ENCODE measurements at regions of chr6 and their contacts with region 1.

Region 1: DNA sequence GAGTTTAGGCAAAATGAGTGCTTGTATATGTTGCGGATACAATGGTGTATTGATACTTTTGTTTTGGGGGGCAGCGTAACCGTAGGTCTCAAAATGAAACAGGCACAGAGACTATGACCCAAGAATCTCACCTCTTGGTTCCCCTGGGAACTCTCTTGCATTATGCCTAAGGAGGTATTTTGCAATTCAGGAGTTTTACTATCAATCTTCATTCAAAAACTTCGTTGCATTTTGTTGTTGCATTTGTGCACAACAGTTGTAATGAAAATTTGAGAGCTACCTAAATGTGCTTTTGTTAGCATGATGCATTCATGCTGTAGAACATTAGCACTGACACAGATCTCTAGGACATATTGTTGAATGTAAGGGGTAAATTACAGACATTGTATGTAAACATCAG is 18.2 kb downstream of the VTA1 start:
- DNase-seq: no peak
- ATAC-seq: no peak
- H3K4me3 ChIP-seq: no peak overlapping the region
- H3K4me3 Mint-ChIP-seq: no peak overlapping the region
- H3K27ac ChIP-seq: no peak overlapping the region
- H3K27ac Mint-ChIP-seq: peak overlapping the region in 1 of 9 donors; percentile 47
- H3K4me1 ChIP-seq: no peaks in the 10 kb centered on the region
- H3K4me1 Mint-ChIP-seq: peaks cover 12 to 53% (median 34%) of the 10 kb centered on the region in 7 donors
- H3K27me3 ChIP-seq: no peaks in the 10 kb centered on the region
- H3K27me3 Mint-ChIP-seq: no peaks in the 10 kb centered on the region

Region 2: GRCh38 chr6:142187209-142187608 is 22.0 kb after region 1 on chr6:
- CTCF ChIA-PET with region 1: no interaction called
- POLR2A ChIA-PET with region 1: no interaction called
- intact Hi-C with region 1: loop called in 1 of 2 experiments (anchors 2 kb)
- DNase-seq: no peak
- ATAC-seq: no peak
- H3K4me3 ChIP-seq: no peak overlapping the region
- H3K4me3 Mint-ChIP-seq: no peak overlapping the region
- H3K27ac ChIP-seq: no peak overlapping the region
- H3K27ac Mint-ChIP-seq: peak overlapping the region in 3 of 9 donors; percentile 11 to 28 (median 16)
- H3K4me1 ChIP-seq: no peaks in the 10 kb centered on the region
- H3K4me1 Mint-ChIP-seq: peaks cover 2 to 46% (median 22%) of the 10 kb centered on the region in 7 donors
- H3K27me3 ChIP-seq: no peaks in the 10 kb centered on the region
- H3K27me3 Mint-ChIP-seq: no peaks in the 10 kb centered on the region

Region 3: DNA sequence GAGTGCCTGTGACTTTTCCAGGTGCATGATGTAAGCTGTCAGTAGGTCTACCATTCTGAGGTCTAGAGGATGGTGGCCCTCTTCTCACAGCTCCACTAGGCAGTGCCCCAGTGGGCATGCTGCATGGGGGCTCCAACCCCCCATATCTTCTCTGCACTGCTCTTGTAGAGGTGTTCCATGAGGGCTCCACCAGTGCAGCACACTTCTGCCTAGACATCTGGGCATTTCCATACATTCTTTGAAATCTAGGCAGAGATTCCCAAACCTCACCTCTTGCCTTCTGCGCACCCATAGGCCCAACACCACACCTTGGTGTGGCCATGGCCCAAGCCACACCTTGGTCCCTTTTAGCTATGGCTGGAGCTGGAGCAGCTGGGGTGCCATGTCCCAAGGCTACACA is 48.2 kb after region 1 on chr6:
- CTCF ChIA-PET with region 1: no interaction called
- POLR2A ChIA-PET with region 1: no interaction called
- intact Hi-C with region 1: no loop called
- DNase-seq: no peak
- ATAC-seq: no peak
- H3K4me3 ChIP-seq: no peak overlapping the region
- H3K4me3 Mint-ChIP-seq: no peak overlapping the region
- H3K27ac ChIP-seq: no peak overlapping the region
- H3K27ac Mint-ChIP-seq: peak overlapping the region in 1 of 9 donors; percentile 6
- H3K4me1 ChIP-seq: no peaks in the 10 kb centered on the region
- H3K4me1 Mint-ChIP-seq: peaks cover 0 to 5% (median 0%) of the 10 kb centered on the region in 7 donors
- H3K27me3 ChIP-seq: no peaks in the 10 kb centered on the region
- H3K27me3 Mint-ChIP-seq: no peaks in the 10 kb centered on the region

Region 4: DNA sequence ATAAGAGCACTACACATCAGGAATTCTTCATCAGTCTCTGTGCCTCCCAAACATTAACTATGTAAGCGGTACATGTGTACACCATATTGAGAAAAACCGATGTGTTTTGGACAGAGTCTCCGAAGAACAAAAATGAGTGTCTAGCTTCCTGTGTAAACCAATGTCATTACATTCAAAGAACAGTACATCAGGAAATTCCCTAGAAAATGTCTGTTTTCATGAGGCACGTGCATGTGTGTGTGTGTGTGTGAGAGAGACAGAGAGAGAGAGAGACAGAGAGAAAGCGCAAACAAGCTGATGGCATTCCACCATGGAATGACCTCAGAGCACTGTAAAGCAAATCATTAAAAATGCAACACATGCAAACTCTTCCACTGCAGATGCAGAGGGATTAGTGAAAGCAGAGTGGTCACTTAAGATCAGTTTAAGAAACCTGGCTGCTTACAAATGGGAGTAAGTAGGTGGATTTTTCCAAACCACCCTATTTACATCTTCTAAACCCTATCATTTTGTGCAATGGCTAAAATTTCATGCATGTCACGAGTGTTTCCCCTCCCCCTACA is 645.8 kb after region 1 on chr6:
- CTCF ChIA-PET with region 1: no interaction called
- POLR2A ChIA-PET with region 1: no interaction called
- intact Hi-C with region 1: no loop called
- DNase-seq: peak in 4 of 9 donors; percentile 25 to 40 (median 32)
- ATAC-seq: peak; percentile 62
- H3K4me3 ChIP-seq: no peak overlapping the region
- H3K4me3 Mint-ChIP-seq: peak overlapping the region; percentile 39 to 72 (median 62)
- H3K27ac ChIP-seq: peak overlapping the region; percentile 17
- H3K27ac Mint-ChIP-seq: peak overlapping the region; percentile 14 to 81 (median 66)
- H3K4me1 ChIP-seq: peaks cover 23 to 39% of the 10 kb centered on the region in 2 donors
- H3K4me1 Mint-ChIP-seq: peaks cover 49 to 97% (median 90%) of the 10 kb centered on the region in 7 donors
- H3K27me3 ChIP-seq: no peaks in the 10 kb centered on the region
- H3K27me3 Mint-ChIP-seq: no peaks in the 10 kb centered on the region

Measured in naive thymus-derived CD4-positive, alpha-beta T cell (primary cell).